ENCODE measurements at regions of chr9 and their contacts with region 1.

Region 1: GRCh38 chr9:5186416-5187169 is 1.2 kb upstream of the INSL6 start:
- DNase-seq: peak; percentile 35 to 73 (median 64)
- H3K4me3 ChIP-seq: no peak overlapping the region
- H3K4me3 Mint-ChIP-seq: peak overlapping the region in 2 of 7 donors; percentile 31 to 44
- H3K27ac ChIP-seq: no peak overlapping the region
- H3K27ac Mint-ChIP-seq: peak overlapping the region in 1 of 8 donors; percentile 40
- H3K4me1 ChIP-seq: peaks cover 7% of the 10 kb centered on the region
- H3K4me1 Mint-ChIP-seq: peaks cover 8 to 13% (median 11%) of the 10 kb centered on the region in 3 donors
- H3K27me3 ChIP-seq: no peaks in the 10 kb centered on the region
- H3K27me3 Mint-ChIP-seq: no peaks in the 10 kb centered on the region

Region 2: GRCh38 chr9:5425006-5425628 is 238.5 kb after region 1 on chr9:
- CTCF ChIA-PET with region 1: interaction called, 72 read pairs
- POLR2A ChIA-PET with region 1: no interaction called
- DNase-seq: peak in 2 of 5 donors; percentile 31 to 36
- H3K4me3 ChIP-seq: no peak overlapping the region
- H3K4me3 Mint-ChIP-seq: no peak overlapping the region
- H3K27ac ChIP-seq: no peak overlapping the region
- H3K27ac Mint-ChIP-seq: no peak overlapping the region
- H3K4me1 ChIP-seq: no peaks in the 10 kb centered on the region
- H3K4me1 Mint-ChIP-seq: peaks cover 7 to 23% (median 8%) of the 10 kb centered on the region in 3 donors
- H3K27me3 ChIP-seq: no peaks in the 10 kb centered on the region
- H3K27me3 Mint-ChIP-seq: no peaks in the 10 kb centered on the region

Region 3: DNA sequence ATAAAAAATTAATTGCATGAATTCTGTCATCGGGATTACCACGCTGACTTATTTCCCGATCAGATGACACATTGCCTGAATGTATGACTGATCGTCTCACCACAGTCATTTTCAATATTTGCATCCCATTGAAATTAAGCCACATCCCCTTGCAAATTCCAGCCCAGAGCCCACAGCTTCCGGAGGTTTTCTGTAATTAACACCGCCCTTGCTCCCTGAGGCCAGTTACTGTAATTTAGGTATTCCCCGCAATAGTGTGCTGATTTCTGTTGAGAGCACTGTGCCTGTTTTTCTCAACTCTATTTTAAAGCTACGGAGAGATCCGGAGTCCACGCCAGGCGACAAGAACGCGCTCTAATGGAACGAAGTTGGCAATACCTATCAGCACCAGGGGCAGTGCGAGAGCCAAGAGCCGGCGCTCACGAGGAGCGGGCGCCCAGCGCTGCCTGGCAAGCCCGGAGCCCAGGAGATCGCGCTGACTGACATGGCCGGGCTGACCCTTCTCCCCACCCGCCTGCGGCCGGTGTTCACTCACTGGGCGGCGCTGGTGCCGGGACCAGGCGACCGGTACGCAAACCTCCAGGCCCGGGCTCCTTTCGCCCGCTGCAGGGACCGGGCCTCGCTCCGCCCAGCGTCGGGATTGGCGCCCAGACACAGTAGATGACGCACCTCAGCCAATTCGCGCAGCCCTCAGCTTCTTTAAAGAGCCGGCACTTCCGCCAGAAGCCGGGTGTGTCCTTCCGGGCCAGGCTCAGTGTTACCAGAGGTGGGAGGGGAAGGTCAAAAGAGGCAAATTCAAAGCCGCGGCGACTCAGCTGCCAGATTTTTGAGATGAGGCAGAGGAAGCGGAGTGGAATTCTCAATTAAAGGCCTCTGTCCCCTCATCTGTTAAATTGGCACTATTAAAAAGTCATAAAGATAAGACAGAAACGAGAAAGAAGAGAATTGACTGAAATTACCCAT is 250.9 kb after region 1 on chr9 and contains the start of gene PLGRKT:
- CTCF ChIA-PET with region 1: interaction called, 29 read pairs
- POLR2A ChIA-PET with region 1: no interaction called
- DNase-seq: peak; percentile 84 to 95 (median 88)
- H3K4me3 ChIP-seq: peak within 1 kb of the TSS; percentile 89
- H3K4me3 Mint-ChIP-seq: peak within 1 kb of the TSS; percentile 90 to 97 (median 95)
- H3K27ac ChIP-seq: peak within 1 kb of the TSS; percentile 82
- H3K27ac Mint-ChIP-seq: peak within 1 kb of the TSS; percentile 97 to 100 (median 99)
- H3K4me1 ChIP-seq: peaks cover 30% of the 10 kb centered on the region
- H3K4me1 Mint-ChIP-seq: peaks cover 29 to 41% (median 37%) of the 10 kb centered on the region in 3 donors
- H3K27me3 ChIP-seq: no peaks in the 10 kb centered on the region
- H3K27me3 Mint-ChIP-seq: no peaks in the 10 kb centered on the region
- total RNA-seq, gene PLGRKT: 34.3 to 36.1 TPM

Region 4: GRCh38 chr9:5450359-5451091 is 263.9 kb after region 1 on chr9 and contains the start of gene CD274:
- CTCF ChIA-PET with region 1: interaction called, 15 read pairs
- POLR2A ChIA-PET with region 1: interaction called, 3 read pairs
- DNase-seq: peak; percentile 66 to 85 (median 79)
- H3K4me3 ChIP-seq: peak within 1 kb of the TSS; percentile 88
- H3K4me3 Mint-ChIP-seq: peak within 1 kb of the TSS; percentile 86 to 98 (median 96)
- H3K27ac ChIP-seq: peak within 1 kb of the TSS; percentile 92
- H3K27ac Mint-ChIP-seq: peak within 1 kb of the TSS; percentile 92 to 99 (median 98)
- H3K4me1 ChIP-seq: peaks cover 42% of the 10 kb centered on the region
- H3K4me1 Mint-ChIP-seq: peaks cover 53 to 91% (median 85%) of the 10 kb centered on the region in 3 donors
- H3K27me3 ChIP-seq: no peaks in the 10 kb centered on the region
- H3K27me3 Mint-ChIP-seq: no peaks in the 10 kb centered on the region
- total RNA-seq, gene CD274: 13.2 to 17.6 TPM

Region 5: DNA sequence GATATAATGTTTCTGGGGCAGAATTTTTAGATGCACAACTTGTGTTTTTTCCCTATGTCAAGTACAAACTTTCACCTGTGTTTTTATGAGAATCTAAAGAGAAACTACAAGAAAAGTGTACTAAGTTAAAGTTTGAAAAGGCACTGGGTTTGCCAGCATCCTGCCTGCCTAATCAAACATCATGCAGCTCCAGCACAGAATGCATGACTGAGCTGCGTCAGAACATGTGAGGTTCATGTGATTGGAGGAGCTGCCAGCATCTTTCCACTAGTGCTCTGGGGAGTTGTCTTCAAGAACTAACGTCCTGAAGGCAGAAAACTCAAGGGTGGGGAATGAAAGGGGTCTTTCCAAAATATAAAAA is 396.2 kb after region 1 on chr9:
- CTCF ChIA-PET with region 1: interaction called, 25 read pairs
- POLR2A ChIA-PET with region 1: no interaction called
- DNase-seq: peak in 2 of 5 donors; percentile 33 to 49
- H3K4me3 ChIP-seq: no peak overlapping the region
- H3K4me3 Mint-ChIP-seq: peak overlapping the region in 1 of 7 donors; percentile 9
- H3K27ac ChIP-seq: no peak overlapping the region
- H3K27ac Mint-ChIP-seq: peak overlapping the region in 4 of 8 donors; percentile 14 to 43 (median 20)
- H3K4me1 ChIP-seq: peaks cover 28% of the 10 kb centered on the region
- H3K4me1 Mint-ChIP-seq: peaks cover 39 to 56% (median 41%) of the 10 kb centered on the region in 3 donors
- H3K27me3 ChIP-seq: no peaks in the 10 kb centered on the region
- H3K27me3 Mint-ChIP-seq: peaks cover 0 to 2% of the 10 kb centered on the region in 2 donors

Region 6: DNA sequence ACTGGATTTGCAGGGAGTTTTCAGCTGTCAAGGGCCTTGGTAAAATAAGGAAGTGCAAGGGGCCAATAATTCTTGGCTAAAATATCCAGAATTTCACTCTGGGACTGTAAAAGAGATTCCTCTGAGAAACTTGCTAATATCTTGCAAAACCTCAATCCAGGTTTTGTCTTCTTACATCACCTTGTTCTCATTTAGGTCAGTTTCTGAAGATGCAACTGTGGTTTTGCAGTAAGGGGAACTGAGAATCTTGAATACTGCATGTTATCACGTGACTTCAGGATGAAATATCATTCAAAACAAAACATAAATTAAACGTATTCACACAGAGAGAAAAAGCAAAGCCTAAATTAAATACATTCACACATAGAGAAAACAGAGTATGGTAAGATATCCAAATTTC is 407.3 kb after region 1 on chr9:
- CTCF ChIA-PET with region 1: interaction called, 42 read pairs
- POLR2A ChIA-PET with region 1: no interaction called
- DNase-seq: no peak
- H3K4me3 ChIP-seq: no peak overlapping the region
- H3K4me3 Mint-ChIP-seq: no peak overlapping the region
- H3K27ac ChIP-seq: no peak overlapping the region
- H3K27ac Mint-ChIP-seq: no peak overlapping the region
- H3K4me1 ChIP-seq: no peaks in the 10 kb centered on the region
- H3K4me1 Mint-ChIP-seq: peaks cover 3 to 5% (median 5%) of the 10 kb centered on the region in 3 donors
- H3K27me3 ChIP-seq: no peaks in the 10 kb centered on the region
- H3K27me3 Mint-ChIP-seq: no peaks in the 10 kb centered on the region